ENCODE measurements at regions of chr16 and their contacts with region 1.

Region 1: GRCh38 chr16:87874639-87875465 is 5.5 kb upstream of the SLC7A5 start:
- DNase-seq: no peak
- ATAC-seq: peak; percentile 52
- H3K4me3 Mint-ChIP-seq: peak overlapping the region; percentile 65
- H3K27ac Mint-ChIP-seq: peak overlapping the region; percentile 72
- H3K4me1 Mint-ChIP-seq: peaks cover 32% of the 10 kb centered on the region
- H3K27me3 Mint-ChIP-seq: peaks cover 1% of the 10 kb centered on the region

Region 2: DNA sequence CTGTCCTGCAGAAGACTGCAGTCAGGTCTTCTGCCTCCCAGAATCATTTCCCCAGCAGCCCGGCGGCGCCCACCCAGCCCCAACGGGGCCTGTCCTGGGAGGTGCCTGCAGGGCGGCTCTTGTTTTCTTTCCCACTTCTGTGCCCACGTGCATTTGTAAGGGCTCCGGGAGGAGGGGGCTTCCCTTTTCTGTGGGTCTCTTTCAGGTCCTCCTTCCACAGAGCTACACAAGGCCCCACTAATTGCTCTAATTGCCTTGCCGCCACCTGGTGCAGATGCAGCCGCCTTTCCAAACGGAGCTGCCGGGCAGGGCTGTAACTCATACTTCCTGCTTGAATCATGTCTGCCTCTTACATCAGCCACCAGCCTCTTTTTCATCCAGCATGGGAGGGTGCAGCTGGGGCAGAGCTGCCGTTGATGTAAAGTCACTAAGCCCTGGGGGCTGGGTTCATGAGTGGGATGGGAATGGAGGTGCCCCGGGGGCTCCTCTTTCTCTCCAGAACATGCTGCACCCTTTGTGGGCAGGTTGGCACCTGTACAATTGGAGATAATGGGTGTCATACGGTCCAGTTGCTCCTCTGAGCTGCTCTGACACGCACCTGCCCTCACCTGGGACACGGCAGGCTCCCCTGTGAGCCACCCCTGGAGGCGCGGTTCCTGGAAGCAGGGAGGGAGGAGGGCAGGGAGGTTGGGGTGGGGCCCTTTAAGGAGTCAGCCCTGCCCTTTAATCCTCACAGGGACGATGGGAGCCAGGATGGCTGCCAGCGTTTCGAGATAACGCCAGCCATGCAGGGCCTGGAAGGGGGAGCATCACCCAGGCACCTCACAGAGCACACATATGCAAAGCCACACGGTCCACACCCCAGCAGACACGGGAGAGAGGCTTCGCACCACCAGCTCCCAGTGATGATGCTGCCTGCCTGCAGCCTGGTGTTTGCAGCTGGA is 68.0 kb before region 1 on chr16:
- POLR2A ChIA-PET with region 1: interaction called, 15 read pairs
- DNase-seq: peak; percentile 72
- ATAC-seq: peak; percentile 87
- H3K4me3 Mint-ChIP-seq: peak overlapping the region; percentile 83
- H3K27ac Mint-ChIP-seq: peak overlapping the region; percentile 100
- H3K4me1 Mint-ChIP-seq: peaks cover 29% of the 10 kb centered on the region
- H3K27me3 Mint-ChIP-seq: no peaks in the 10 kb centered on the region

Region 3: GRCh38 chr16:87895641-87896141 is 20.8 kb after region 1 on chr16:
- POLR2A ChIA-PET with region 1: interaction called, 23 read pairs
- DNase-seq: peak; percentile 77
- ATAC-seq: peak; percentile 83
- H3K4me3 Mint-ChIP-seq: peak overlapping the region; percentile 73
- H3K27ac Mint-ChIP-seq: peak overlapping the region; percentile 96
- H3K4me1 Mint-ChIP-seq: peaks cover 38% of the 10 kb centered on the region
- H3K27me3 Mint-ChIP-seq: no peaks in the 10 kb centered on the region